MCF 10A (cell line): ENCODE measurements at regions of chr15 and their contacts with region 1.

Region 1: GRCh38 chr15:36903922-36904556 is 196.3 kb downstream of the MEIS2 start:
- DNase-seq: peak; percentile 86
- H3K4me3 Mint-ChIP-seq: peak overlapping the region; percentile 7
- H3K27ac Mint-ChIP-seq: peak overlapping the region; percentile 15
- H3K4me1 Mint-ChIP-seq: peaks cover 11% of the 10 kb centered on the region
- H3K27me3 Mint-ChIP-seq: no peaks in the 10 kb centered on the region
- CTCF ChIP-seq: no peak

Region 2: GRCh38 chr15:36428102-36428845 is 475.8 kb before region 1 on chr15:
- CTCF ChIA-PET with region 1: no interaction called
- POLR2A ChIA-PET with region 1: no interaction called
- intact Hi-C with region 1: no loop called
- DNase-seq: peak; percentile 89
- H3K4me3 Mint-ChIP-seq: no peak overlapping the region
- H3K27ac Mint-ChIP-seq: no peak overlapping the region
- H3K4me1 Mint-ChIP-seq: peaks cover 7% of the 10 kb centered on the region
- H3K27me3 Mint-ChIP-seq: no peaks in the 10 kb centered on the region
- CTCF ChIP-seq: no peak

Region 3: GRCh38 chr15:37100109-37100965 is 196.3 kb after region 1 on chr15 and contains the start of gene MEIS2:
- CTCF ChIA-PET with region 1: interaction called, 3 read pairs
- POLR2A ChIA-PET with region 1: interaction called, 19 read pairs
- intact Hi-C with region 1: no loop called
- DNase-seq: peak; percentile 85
- H3K4me3 Mint-ChIP-seq: peak within 1 kb of the TSS; percentile 100
- H3K27ac Mint-ChIP-seq: peak within 1 kb of the TSS; percentile 93
- H3K4me1 Mint-ChIP-seq: peaks cover 20% of the 10 kb centered on the region
- H3K27me3 Mint-ChIP-seq: no peaks in the 10 kb centered on the region
- CTCF ChIP-seq: no peak
- total RNA-seq, gene MEIS2: 6.9 and 10.3 TPM in 2 replicates